ENCODE measurements at regions of chr11 and their contacts with region 1.

Region 1: DNA sequence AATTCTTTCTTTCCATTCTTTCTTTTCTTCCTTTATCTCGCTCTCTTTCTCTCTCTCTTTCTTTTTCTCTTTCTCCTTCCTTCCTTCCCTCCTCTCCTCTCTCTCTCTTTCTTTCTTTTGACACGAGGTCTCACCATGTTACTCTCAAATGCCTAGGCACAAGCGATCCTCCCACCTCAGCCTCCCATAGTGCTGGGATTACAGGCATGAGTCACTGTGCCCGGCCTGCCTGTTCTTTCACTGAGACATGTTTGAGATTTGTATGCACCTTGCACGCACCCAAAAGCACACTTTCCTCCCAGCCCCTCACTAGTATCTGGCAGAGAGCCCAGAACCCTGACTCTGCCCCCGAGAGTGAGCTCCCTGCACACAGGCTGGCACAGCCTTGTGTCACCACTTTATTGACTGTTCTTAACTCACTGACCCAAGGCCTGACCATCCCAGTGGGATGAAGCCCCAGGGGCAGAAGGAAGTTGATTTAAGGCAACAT is 56.8 kb downstream of the CD6 start:
- DNase-seq: peak in 1 of 5 donors; percentile 83
- H3K4me3 ChIP-seq: no peak overlapping the region
- H3K4me3 Mint-ChIP-seq: peak overlapping the region; percentile 74 to 91 (median 86)
- H3K27ac ChIP-seq: peak overlapping the region; percentile 66
- H3K27ac Mint-ChIP-seq: peak overlapping the region; percentile 98 to 100 (median 98)
- H3K4me1 ChIP-seq: peaks cover 59% of the 10 kb centered on the region
- H3K4me1 Mint-ChIP-seq: peaks cover 53 to 85% (median 67%) of the 10 kb centered on the region in 4 donors
- H3K27me3 ChIP-seq: no peaks in the 10 kb centered on the region
- H3K27me3 Mint-ChIP-seq: no peaks in the 10 kb centered on the region

Region 2: GRCh38 chr11:60978546-60979380 is 49.6 kb before region 1 on chr11:
- CTCF ChIA-PET with region 1: no interaction called
- POLR2A ChIA-PET with region 1: interaction called, 73 read pairs
- intact Hi-C with region 1: no loop called
- DNase-seq: peak; percentile 49 to 82 (median 52)
- H3K4me3 ChIP-seq: peak overlapping the region in 1 of 2 donors; percentile 28
- H3K4me3 Mint-ChIP-seq: peak overlapping the region; percentile 81 to 98 (median 86)
- H3K27ac ChIP-seq: peak overlapping the region; percentile 92
- H3K27ac Mint-ChIP-seq: peak overlapping the region; percentile 88 to 100 (median 97)
- H3K4me1 ChIP-seq: peaks cover 91% of the 10 kb centered on the region
- H3K4me1 Mint-ChIP-seq: peaks cover 55 to 98% (median 77%) of the 10 kb centered on the region in 4 donors
- H3K27me3 ChIP-seq: no peaks in the 10 kb centered on the region
- H3K27me3 Mint-ChIP-seq: no peaks in the 10 kb centered on the region

Region 3: GRCh38 chr11:60992842-60993409 is 35.4 kb before region 1 on chr11:
- CTCF ChIA-PET with region 1: no interaction called
- POLR2A ChIA-PET with region 1: interaction called, 73 read pairs
- intact Hi-C with region 1: no loop called
- DNase-seq: peak in 1 of 5 donors; percentile 7
- H3K4me3 ChIP-seq: no peak overlapping the region
- H3K4me3 Mint-ChIP-seq: peak overlapping the region; percentile 34 to 81 (median 78)
- H3K27ac ChIP-seq: peak overlapping the region; percentile 51
- H3K27ac Mint-ChIP-seq: peak overlapping the region; percentile 84 to 96 (median 94)
- H3K4me1 ChIP-seq: peaks cover 92% of the 10 kb centered on the region
- H3K4me1 Mint-ChIP-seq: peaks cover 53 to 86% (median 72%) of the 10 kb centered on the region in 4 donors
- H3K27me3 ChIP-seq: no peaks in the 10 kb centered on the region
- H3K27me3 Mint-ChIP-seq: no peaks in the 10 kb centered on the region

Region 4: DNA sequence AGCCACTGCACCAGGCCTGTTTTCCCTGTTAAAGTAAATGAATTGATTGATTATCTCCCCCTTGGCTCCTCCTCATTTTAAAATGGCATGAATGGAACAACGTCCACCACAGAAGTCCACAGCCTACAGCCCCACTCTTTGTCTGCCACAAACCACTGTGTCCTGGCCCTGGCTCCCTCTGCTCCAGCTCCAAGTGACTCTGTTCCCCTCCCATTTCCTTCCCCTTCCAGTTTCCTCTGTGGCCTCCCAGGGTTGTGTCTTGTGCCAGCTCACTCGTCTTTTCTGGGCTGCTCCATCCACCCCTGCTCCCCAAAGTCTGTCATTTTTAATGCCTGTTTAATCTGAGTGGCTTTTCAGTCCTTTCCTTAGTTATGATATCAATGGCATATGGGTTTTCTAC is 21.5 kb after region 1 on chr11:
- CTCF ChIA-PET with region 1: interaction called, 4 read pairs
- POLR2A ChIA-PET with region 1: interaction called, 427 read pairs
- intact Hi-C with region 1: no loop called
- DNase-seq: no peak
- H3K4me3 ChIP-seq: no peak overlapping the region
- H3K4me3 Mint-ChIP-seq: peak overlapping the region in 2 of 8 donors; percentile 41 to 63
- H3K27ac ChIP-seq: no peak overlapping the region
- H3K27ac Mint-ChIP-seq: peak overlapping the region; percentile 26 to 84 (median 71)
- H3K4me1 ChIP-seq: peaks cover 50% of the 10 kb centered on the region
- H3K4me1 Mint-ChIP-seq: peaks cover 36 to 71% (median 44%) of the 10 kb centered on the region in 4 donors
- H3K27me3 ChIP-seq: no peaks in the 10 kb centered on the region
- H3K27me3 Mint-ChIP-seq: no peaks in the 10 kb centered on the region

Region 5: DNA sequence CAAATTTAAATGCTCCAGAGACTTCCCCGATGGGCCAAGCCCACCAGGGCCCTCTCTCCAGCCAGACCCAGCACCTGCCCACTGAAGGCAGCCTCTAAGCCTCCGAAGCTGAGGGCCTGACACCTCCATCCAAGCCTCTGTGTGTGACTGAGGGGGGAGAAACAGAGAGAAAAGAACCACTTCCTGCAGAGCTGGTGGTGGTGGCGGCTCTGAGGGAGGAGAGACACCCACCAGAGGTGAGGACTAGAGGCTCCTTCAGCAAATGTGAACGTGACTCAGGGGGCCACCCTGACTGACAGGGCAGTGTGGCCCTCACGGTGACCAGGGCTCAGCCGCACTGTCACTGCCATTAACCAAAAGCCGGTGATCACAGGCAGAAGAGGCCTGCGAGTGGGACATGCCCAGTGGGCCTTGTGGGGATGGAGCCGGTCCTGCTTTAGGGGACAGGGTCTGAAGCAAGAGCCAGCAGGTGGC is 42.9 kb after region 1 on chr11:
- CTCF ChIA-PET with region 1: interaction called, 3 read pairs
- POLR2A ChIA-PET with region 1: interaction called, 253 read pairs
- intact Hi-C with region 1: loop called (anchors 1 kb)
- DNase-seq: peak; percentile 61 to 77 (median 72)
- H3K4me3 ChIP-seq: peak overlapping the region in 1 of 2 donors; percentile 21
- H3K4me3 Mint-ChIP-seq: peak overlapping the region; percentile 60 to 89 (median 79)
- H3K27ac ChIP-seq: peak overlapping the region; percentile 63
- H3K27ac Mint-ChIP-seq: peak overlapping the region; percentile 92 to 98 (median 96)
- H3K4me1 ChIP-seq: peaks cover 98% of the 10 kb centered on the region
- H3K4me1 Mint-ChIP-seq: peaks cover 50 to 92% (median 74%) of the 10 kb centered on the region in 4 donors
- H3K27me3 ChIP-seq: no peaks in the 10 kb centered on the region
- H3K27me3 Mint-ChIP-seq: no peaks in the 10 kb centered on the region

Region 6: GRCh38 chr11:61091373-61092279 is 63.3 kb after region 1 on chr11:
- CTCF ChIA-PET with region 1: interaction called, 4 read pairs
- POLR2A ChIA-PET with region 1: interaction called, 15 read pairs
- intact Hi-C with region 1: no loop called
- DNase-seq: peak in 1 of 5 donors; percentile 74
- H3K4me3 ChIP-seq: peak overlapping the region in 1 of 2 donors; percentile 16
- H3K4me3 Mint-ChIP-seq: peak overlapping the region; percentile 71 to 89 (median 80)
- H3K27ac ChIP-seq: peak overlapping the region; percentile 87
- H3K27ac Mint-ChIP-seq: peak overlapping the region; percentile 95 to 99 (median 97)
- H3K4me1 ChIP-seq: peaks cover 52% of the 10 kb centered on the region
- H3K4me1 Mint-ChIP-seq: peaks cover 44 to 75% (median 50%) of the 10 kb centered on the region in 4 donors
- H3K27me3 ChIP-seq: no peaks in the 10 kb centered on the region
- H3K27me3 Mint-ChIP-seq: no peaks in the 10 kb centered on the region

Region 7: DNA sequence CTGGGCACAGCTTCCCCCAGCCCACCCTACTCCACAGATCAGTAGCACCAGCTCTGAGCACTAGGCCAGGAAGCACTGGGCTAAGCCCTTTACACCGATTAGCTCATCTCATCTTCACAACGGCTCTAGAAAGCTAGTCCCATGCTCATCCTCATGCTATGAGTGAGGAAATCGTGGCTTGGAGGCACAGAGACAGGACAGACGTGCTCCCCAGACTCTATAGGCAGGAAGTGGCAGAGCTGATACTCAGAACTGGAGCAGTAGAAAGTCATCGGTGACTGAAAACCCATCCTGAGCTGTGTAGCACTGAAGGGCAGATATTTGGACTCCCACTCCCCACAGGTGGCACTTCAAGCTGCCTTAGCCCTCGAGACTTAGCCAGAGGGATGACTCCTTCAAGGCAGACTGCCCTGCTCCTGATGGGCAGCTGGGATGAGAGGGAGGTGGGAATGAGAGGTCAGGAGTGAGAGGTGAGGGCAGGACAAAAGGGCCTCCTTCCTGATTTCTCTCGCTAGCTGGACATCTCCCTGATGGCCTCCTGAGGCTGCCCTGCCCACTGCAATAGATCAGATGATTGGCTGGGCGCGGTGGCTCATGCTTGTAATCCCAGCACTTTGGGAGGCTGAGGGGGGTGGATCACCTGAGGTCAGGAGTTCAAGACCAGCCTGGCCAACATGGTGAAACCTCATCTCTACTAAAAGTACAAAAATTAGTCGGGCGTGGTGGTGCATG is 83.6 kb after region 1 on chr11:
- CTCF ChIA-PET with region 1: interaction called, 3 read pairs
- POLR2A ChIA-PET with region 1: interaction called, 43 read pairs
- intact Hi-C with region 1: no loop called
- DNase-seq: peak; percentile 64 to 87 (median 72)
- H3K4me3 ChIP-seq: peak overlapping the region in 1 of 2 donors; percentile 20
- H3K4me3 Mint-ChIP-seq: peak overlapping the region in 5 of 8 donors; percentile 37 to 83 (median 75)
- H3K27ac ChIP-seq: peak overlapping the region; percentile 100
- H3K27ac Mint-ChIP-seq: peak overlapping the region in 5 of 7 donors; percentile 78 to 98 (median 89)
- H3K4me1 ChIP-seq: peaks cover 100% of the 10 kb centered on the region
- H3K4me1 Mint-ChIP-seq: peaks cover 0 to 100% (median 82%) of the 10 kb centered on the region in 4 donors
- H3K27me3 ChIP-seq: no peaks in the 10 kb centered on the region
- H3K27me3 Mint-ChIP-seq: no peaks in the 10 kb centered on the region